Vagina (tissue), 2 donors: ENCODE measurements at regions of chr7 and their contacts with region 1.

Region 1: DNA sequence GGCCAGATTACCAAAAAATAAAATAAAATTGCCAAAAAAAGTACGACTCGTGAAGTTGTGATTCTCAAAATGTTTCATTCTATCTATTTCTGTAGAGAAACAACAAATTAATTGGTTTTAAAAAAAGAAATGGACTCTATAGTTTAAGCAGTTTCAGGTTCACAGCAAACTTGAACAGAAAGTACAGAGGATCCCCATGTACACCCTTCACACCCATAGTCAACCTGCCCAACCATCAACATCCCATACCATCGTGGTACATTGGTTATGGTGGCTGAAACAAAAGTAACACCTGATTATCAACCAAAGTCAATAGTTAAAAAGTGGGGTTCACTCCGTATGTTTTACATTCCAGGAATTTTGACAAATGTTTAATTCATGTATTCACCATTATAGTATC is 496.1 kb downstream of the ANKRD7 start:
- DNase-seq: no peak
- H3K4me3 ChIP-seq: no peak overlapping the region
- H3K27ac ChIP-seq: no peak overlapping the region
- H3K4me1 ChIP-seq: no peaks in the 10 kb centered on the region
- H3K27me3 ChIP-seq: no peaks in the 10 kb centered on the region
- CTCF ChIP-seq: no peak
- POLR2A ChIP-seq: no peak

Region 2: GRCh38 chr7:118708741-118709140 is 11.9 kb before region 1 on chr7:
- intact Hi-C with region 1: loop called (anchors 2 kb)
- DNase-seq: no peak
- H3K4me3 ChIP-seq: no peak overlapping the region
- H3K27ac ChIP-seq: no peak overlapping the region
- H3K4me1 ChIP-seq: no peaks in the 10 kb centered on the region
- H3K27me3 ChIP-seq: no peaks in the 10 kb centered on the region
- CTCF ChIP-seq: no peak
- POLR2A ChIP-seq: no peak